ENCODE measurements at regions of chrX and their contacts with region 1.

Region 1: DNA sequence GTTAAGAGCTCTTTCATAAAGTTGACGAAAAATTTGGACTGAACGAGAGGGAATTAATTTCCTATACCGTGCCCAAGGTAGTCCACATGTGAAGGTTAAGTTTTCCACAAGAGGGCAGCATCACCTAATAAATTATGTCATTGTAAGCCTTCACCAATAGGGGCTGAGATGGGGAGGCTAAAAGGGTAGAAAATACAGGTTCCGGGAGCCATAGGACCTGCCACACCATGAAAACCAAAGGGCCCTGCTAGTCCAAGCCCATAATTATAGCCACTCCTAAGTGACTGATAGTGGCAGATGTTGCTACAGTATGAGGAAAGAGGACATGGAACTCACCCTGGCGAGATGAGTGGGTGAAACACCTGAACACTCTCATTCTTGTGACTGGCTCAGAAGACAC is 122.2 kb downstream of the SHROOM4 start:
- DNase-seq: peak; percentile 44
- ATAC-seq: peak; percentile 58
- H3K4me3 ChIP-seq: no peak overlapping the region
- H3K4me3 Mint-ChIP-seq: no peak overlapping the region
- H3K27ac ChIP-seq: no peak overlapping the region
- H3K27ac Mint-ChIP-seq: no peak overlapping the region
- H3K4me1 ChIP-seq: no peaks in the 10 kb centered on the region
- H3K4me1 Mint-ChIP-seq: no peaks in the 10 kb centered on the region
- H3K27me3 ChIP-seq: no peaks in the 10 kb centered on the region
- H3K27me3 Mint-ChIP-seq: peaks cover 3% of the 10 kb centered on the region
- CTCF ChIP-seq: peak; percentile 51

Region 2: DNA sequence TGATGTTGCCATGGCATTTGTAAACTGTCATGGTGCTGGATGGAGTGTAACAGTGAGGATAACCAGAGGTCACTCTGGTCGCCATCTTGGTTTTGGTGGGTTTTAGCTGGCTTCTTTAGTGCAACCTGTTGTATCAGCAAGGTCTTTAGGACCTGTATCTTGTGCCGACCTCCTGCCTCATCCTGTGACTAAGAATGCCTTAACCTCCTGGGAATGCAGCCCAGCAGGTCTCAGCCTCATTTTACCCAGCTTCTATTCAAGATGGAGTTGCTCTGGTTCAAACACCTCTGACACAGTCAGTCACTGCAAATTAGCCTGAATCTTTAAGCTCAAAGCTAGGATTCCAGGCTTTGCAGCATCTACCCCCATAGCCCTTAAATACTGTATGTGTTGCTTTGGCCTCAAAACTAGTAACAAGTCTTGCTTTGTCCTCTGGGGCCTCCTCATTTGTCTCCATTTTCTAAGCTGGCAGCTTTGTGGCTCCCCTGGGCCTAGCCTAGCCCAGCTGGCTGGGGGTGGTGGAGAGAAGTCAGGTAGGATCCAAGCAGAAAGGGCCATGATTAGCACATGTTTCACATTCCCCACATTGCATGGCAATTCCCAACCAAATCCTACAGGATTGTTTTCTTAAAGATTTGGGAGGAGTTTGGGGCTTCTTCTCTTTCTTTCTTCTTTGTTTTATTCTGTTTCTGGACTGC is 29.8 kb after region 1 on chrX:
- CTCF ChIA-PET with region 1: no interaction called
- POLR2A ChIA-PET with region 1: no interaction called
- intact Hi-C with region 1: no loop called
- DNase-seq: no peak
- ATAC-seq: no peak
- H3K4me3 ChIP-seq: no peak overlapping the region
- H3K4me3 Mint-ChIP-seq: no peak overlapping the region
- H3K27ac ChIP-seq: no peak overlapping the region
- H3K27ac Mint-ChIP-seq: no peak overlapping the region
- H3K4me1 ChIP-seq: no peaks in the 10 kb centered on the region
- H3K4me1 Mint-ChIP-seq: no peaks in the 10 kb centered on the region
- H3K27me3 ChIP-seq: no peaks in the 10 kb centered on the region
- H3K27me3 Mint-ChIP-seq: no peaks in the 10 kb centered on the region
- CTCF ChIP-seq: no peak

Region 3: GRCh38 chrX:50988649-50989048 is 296.8 kb after region 1 on chrX:
- CTCF ChIA-PET with region 1: interaction called, 3 read pairs
- POLR2A ChIA-PET with region 1: no interaction called
- intact Hi-C with region 1: loop called (anchors 5 kb)
- DNase-seq: no peak
- ATAC-seq: no peak
- H3K4me3 ChIP-seq: no peak overlapping the region
- H3K4me3 Mint-ChIP-seq: no peak overlapping the region
- H3K27ac ChIP-seq: no peak overlapping the region
- H3K27ac Mint-ChIP-seq: no peak overlapping the region
- H3K4me1 ChIP-seq: no peaks in the 10 kb centered on the region
- H3K4me1 Mint-ChIP-seq: no peaks in the 10 kb centered on the region
- H3K27me3 ChIP-seq: no peaks in the 10 kb centered on the region
- H3K27me3 Mint-ChIP-seq: peaks cover 5% of the 10 kb centered on the region
- CTCF ChIP-seq: peak; percentile 20

Measured in B cell (primary cell).